ENCODE measurements at regions of chr17 and their contacts with region 1.

Region 1: DNA sequence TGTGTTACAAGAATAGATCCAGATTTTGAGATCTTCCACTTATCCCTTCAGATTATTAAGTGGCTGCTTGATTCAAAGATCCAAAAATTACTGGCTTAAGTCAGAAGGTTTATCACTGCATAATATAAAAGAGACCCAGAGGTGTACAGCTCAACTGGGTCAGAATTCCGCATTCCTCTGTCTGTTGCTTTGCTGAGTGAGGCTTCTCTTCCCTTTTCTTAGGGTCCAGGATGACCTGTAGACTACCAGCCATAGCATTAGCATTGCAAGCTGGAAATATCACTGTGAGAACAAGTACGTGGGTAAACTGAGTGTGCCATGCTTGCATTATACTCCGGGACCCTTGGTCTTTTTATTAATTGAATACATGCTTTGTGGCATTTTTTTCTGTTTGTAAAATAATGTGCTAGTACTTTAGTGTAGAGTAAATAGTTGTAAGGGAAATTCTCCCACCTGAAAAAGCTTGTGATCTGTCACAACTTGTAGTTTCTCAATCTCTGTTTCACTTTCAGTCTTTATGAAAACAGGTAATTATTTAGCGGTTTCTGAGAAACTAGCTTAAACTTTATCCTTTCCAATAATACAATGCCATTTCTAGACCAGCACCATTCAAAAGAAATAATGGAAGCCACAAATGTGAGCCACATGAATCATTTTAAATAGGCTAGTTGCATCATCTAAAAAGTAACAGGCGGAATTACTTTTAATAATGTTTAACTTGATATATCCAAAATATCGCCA is 61.6 kb downstream of the TNRC6C start:
- DNase-seq: no peak
- ATAC-seq: no peak

Region 2: DNA sequence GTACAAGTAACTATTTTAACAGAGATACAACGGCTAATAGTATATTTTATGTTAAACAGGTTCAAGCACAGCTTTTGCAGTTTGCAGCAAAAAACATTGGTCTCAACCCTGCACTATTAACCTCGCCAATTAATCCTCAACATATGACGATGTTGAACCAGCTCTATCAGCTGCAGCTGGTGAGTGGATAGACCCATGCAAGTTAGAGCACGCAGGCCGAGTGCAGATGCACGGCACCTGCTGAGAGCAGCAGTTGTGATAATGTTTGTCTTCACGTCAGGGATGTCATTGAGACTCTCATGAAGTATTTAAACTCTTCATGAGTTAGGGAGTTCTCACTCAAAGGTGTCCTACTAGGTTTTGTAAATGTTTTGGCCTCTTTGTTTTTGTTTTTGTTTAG is 62.8 kb after region 1 on chr17:
- intact Hi-C with region 1: loop called (anchors 10 kb)
- DNase-seq: no peak
- ATAC-seq: no peak

Region 3: DNA sequence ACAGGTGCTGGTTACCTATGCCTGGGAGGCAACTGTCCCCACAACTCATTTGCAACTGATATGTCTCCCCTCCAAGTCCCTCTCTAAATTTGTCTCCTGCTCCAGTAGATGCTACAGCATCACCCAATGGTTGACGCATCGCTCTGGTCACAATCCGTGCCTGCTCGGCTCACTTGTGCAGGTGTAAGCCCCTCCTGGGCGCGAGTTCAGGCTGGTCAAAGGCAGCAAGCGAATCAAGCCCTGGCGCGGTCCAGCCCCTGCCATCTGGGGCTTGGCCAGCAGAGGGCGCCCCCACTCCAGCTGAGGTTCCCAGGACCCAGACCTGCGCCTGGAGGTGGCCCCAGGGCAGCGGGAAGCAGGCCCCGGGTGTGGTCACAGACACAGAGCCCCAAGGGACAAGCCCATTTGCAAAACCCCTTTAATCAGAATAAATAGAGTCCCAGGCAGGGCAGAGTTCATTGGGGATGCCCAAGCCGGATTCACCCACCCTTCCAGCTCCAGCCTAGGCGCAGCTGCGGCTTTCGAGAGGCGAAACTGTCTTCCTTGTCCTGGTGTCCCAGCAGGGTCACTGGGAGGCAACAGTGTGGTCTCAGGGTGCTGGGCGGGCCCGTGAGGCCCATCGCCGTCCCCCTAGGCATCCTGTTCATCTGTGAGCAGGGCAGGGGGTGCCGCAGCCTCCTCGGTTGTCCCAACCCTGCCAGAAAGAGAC is 92.5 kb after region 1 on chr17:
- intact Hi-C with region 1: no loop called
- DNase-seq: peak; percentile 91
- ATAC-seq: peak; percentile 65

Region 4: DNA sequence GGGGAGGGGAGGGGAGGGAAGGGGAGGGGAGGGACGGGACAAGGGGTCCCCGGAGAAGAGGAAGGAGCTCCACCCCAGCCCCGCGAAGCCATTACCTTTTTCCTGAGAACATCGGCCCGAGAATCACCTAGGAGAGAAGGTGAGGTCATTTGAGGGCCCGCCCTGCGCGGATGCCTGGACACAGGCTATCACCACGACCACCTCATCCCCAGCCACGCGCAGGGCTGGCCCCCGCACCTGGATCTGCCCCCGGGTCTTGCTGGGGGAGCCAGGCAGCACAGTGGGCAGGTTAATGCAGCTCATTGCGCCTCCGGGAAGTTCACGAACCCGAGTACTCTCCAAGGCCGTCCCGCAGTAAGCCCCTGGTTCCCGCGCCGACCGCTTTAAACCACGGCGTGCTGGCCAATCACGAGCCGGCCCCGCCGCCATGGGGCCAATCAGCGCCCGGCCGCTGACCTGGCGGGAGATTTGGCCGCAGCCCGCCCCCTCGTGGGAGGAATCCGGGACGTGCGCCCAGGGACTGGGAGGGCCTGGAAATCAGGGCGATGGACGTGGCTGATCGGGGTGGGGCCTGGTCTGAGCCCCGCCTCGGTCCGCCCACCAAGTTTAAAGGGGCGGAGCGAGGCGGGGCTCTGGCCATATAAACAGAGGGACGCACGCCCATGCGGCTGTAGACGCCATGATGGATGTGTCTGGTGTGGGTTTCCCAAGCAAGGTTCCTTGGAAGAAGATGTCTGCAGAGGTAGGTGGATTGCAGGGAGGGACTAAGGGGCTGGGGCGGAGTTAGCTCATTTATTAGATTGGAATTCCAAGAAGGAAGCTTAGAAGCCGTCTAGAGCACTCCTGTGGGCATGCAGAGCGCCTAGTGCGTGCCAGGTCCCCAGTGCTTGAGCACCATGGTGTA is 166.8 kb after region 1 on chr17 and contains the starts of genes AFMID and TK1:
- intact Hi-C with region 1: loop called (anchors 10 kb)
- DNase-seq: peak; percentile 97
- ATAC-seq: peak; percentile 98
- total RNA-seq, gene AFMID: 38.2 TPM
- total RNA-seq, gene TK1: 5.2 TPM